ENCODE measurements at regions of chr14 and their contacts with region 1.

Region 1: DNA sequence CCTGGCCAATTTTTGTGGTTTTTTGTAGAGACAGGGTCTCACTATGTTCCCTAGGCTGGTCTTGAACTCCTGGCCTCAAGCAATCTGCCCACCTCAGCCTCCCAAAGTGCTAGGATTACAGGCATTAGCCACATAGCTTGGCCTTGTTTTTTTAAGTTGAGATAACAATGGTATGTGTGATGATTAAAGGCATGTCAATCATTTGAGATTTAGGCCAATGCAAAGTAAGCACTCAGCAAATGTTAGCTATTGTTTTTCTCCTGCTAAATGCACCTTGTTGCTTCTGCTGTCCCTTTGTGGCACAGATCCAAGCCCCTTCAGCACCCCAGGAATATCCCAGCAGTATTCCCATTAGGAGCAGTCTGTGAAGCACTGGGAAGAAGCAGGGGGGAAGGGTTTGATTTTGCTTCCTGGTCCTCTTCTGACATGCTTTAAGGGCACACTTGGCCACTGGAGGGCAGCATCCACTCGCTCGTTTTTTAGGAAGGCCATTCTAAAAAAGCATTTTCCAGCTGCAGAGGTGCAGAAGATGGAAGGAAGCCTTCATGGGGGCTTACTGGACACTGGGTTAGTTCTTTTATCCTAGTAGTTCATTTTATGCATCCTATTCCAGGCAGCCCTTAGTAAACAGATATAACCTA is 70.2 kb upstream of the ZFP36L1 start:
- DNase-seq: peak in 4 of 5 donors; percentile 73 to 80 (median 76)
- ATAC-seq: peak; percentile 57 to 84 (median 79)
- H3K4me3 ChIP-seq: no peak overlapping the region
- H3K27ac ChIP-seq: no peak overlapping the region
- H3K4me1 ChIP-seq: no peaks in the 10 kb centered on the region
- H3K27me3 ChIP-seq: no peaks in the 10 kb centered on the region
- CTCF ChIP-seq: peak; percentile 61 to 82 (median 73)
- POLR2A ChIP-seq: no peak

Region 2: DNA sequence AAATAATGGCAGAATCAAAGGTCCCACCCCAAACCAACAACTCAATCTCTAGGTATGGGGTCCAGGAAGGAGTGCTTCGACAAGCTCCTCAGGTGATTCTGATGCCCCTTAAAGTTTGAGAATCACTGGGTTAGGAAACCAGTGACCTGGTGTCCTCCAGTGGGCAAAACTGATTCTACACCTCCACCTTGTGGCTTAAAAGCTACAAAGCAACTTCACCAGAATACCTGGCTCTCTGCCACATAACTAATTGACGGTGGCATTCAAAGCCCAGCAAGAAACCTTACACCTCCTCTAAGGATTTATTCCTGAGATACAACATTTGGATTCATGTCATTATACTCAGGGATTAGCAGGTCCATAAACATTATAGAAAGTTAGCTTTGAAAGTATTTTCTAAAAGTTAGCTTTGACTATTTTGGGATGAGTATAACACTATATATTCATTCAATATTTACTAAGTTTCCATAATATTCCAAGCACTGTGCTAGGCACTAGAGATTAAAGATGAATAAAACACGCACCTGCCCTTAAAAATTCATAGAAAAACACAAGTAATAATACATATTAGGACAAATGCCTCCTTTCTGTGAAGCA is 244.4 kb after region 1 on chr14:
- intact Hi-C with region 1: loop called (anchors 2 to 5 kb)
- DNase-seq: peak in 2 of 5 donors; percentile 36 to 37
- ATAC-seq: peak; percentile 44 to 78 (median 68)
- H3K4me3 ChIP-seq: no peak overlapping the region
- H3K27ac ChIP-seq: no peak overlapping the region
- H3K4me1 ChIP-seq: peaks cover 0 to 3% (median 0%) of the 10 kb centered on the region in 12 donors
- H3K27me3 ChIP-seq: no peaks in the 10 kb centered on the region
- CTCF ChIP-seq: peak; percentile 46 to 77 (median 66)
- POLR2A ChIP-seq: no peak